ENCODE measurements at regions of chr7 and their contacts with region 1.

Region 1: DNA sequence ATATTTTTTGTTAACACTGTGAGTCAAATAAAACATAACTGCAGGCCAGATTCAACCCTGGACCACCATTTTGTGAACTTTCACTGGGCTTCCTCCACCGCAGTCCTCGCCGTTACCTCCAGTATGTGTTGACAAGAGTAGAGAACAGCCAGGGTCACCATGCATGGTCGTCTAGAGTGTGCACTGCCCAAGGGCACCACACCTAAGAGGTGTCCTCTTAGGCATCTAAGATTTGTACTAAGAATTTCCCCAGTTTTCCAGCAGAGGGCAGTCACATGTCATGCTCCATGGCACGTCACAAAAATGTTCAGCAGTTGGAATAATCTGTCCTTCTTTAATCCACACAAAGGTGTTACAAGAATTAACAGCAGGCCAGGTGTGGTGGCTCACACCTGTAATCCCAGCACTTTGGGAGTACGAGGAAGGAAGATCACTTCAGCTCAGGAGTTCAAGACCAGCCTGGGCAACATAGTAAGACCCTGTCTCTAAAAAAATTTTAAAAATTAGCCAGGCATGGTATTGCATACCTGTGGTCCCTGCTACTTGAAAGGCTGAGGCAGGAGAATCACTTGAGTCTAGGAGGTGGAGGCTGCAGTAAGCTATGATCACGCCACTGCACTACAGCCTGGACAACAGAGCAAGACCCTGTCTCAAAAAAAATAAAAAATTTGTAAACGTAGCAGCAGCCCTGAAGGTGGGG is 71.2 kb upstream of the FOXK1 start:
- DNase-seq: no peak
- ATAC-seq: peak; percentile 70

Region 2: GRCh38 chr7:4631664-4632171 is 20.8 kb after region 1 on chr7:
- intact Hi-C with region 1: loop called (anchors 2 kb)
- DNase-seq: peak; percentile 83
- ATAC-seq: peak; percentile 98

Region 3: GRCh38 chr7:4681886-4682620 is 71.1 kb after region 1 on chr7 and contains the start of gene FOXK1:
- intact Hi-C with region 1: loop called (anchors 2 kb)
- DNase-seq: peak; percentile 90
- ATAC-seq: peak; percentile 89
- total RNA-seq, gene FOXK1: 16.8 TPM

Region 4: DNA sequence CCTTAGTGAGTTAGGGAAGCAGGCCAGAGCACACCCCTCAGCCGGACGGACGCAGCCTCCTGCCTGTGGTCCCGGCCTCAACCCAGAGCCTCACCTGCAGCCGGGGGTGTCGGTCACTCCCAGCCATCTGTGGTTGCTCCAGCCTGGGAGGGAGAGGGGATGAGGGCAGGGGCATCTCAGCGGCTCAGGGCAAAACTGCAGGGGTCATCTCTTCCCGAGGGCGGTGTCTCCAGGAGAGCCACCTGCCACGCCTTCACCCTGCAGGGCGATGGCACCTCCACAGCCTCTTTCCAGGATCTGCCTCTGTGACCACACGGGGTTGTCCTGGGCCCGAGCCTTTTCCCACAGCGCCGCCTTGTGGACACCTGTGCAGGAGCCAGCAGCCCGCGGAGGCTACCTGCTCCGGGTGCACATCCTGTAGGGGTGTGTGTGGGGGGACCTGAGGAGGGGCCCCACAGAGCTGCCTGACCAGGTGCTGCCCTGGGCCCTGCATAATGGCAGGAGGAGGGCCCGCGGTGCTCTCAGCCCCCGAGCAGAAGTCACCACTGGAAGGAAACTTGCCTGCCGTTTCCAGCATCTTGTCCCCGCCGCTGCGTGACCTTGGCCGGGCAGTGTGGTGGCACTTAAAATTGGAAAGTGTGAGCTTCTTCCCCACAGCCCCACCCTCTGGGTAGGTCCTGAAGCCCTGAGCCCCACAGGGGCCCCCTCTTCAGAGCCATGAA is 143.0 kb after region 1 on chr7:
- intact Hi-C with region 1: loop called (anchors 1 kb)
- DNase-seq: peak; percentile 92
- ATAC-seq: peak; percentile 77

Region 5: DNA sequence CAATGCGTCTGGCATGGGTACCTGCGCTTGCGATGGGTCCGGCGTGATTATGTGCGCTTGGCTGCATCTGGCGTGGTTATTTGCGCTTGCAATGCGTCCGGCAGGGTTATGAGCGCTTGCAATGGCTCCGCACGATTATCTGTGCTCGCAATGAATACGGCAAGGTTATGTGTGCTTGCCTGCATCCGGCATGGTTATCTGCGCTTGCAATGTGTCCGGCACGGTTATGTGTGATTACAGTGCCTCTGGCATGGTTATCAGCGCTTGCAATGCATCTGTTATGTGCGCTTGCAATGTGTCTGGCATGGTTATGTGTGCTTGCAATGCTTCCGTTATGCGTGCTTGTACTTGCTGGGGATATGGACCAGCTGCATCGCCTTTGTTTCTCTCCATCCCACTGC is 472.4 kb after region 1 on chr7:
- intact Hi-C with region 1: loop called (anchors 10 kb)
- DNase-seq: no peak
- ATAC-seq: no peak

Measured in Right ventricle myocardium inferior (tissue), 1 donor.